Posterior cingulate gyrus (tissue), 11 donors: ENCODE measurements at regions of chr16 and their contacts with region 1.

Region 1: GRCh38 chr16:57648590-57649442 is 19.3 kb upstream of the ADGRG3 start:
- DNase-seq: peak; percentile 60 to 97 (median 80)

Region 2: GRCh38 chr16:57519796-57520360 is 128.9 kb before region 1 on chr16:
- intact Hi-C with region 1: no loop called
- DNase-seq: peak; percentile 67 to 97 (median 85)

Region 3: GRCh38 chr16:57591086-57591869 is 57.5 kb before region 1 on chr16:
- intact Hi-C with region 1: loop called (anchors 1 kb)
- DNase-seq: peak; percentile 30 to 94 (median 70)

Region 4: DNA sequence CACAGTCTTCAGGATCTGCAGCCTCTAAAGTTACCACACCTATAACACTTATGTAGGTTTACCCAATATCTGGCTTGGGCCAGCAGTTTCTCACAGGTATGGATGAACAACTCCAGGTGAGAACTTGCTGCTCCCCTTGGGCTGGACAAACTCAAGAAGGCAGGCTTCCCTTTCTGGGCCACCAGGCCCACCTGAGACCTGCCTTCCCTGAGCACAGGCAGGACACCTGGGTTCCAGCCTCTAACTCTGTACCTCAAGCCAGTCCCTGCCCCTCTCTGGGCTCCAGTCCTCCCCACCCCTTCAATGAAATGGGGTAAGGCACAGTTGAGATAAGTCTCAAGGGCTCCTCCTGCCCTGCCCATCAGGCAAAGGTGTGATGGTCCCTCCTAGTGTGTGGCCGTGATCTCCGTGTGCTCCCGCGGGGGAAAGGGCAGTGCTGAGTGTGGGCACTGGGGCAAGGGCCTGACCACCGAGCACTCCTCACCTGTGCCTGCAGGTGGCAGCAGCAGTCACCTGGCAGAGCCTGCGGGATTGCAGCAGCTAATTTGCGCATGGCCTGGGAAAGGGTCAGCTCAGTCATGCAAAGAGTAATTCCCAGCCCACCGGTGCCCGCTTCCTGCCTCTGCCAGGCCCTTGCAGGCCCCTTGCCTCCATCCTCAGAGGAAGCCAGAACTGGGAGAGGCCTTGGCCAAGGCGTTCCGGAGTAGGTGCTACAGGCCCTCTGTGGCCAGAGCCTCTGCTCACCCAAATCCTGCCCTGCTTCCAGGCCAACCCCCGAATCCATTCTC is 48.6 kb before region 1 on chr16:
- intact Hi-C with region 1: loop called (anchors 2 kb)
- DNase-seq: peak in 4 of 10 donors; percentile 37 to 92 (median 62)